ENCODE measurements at regions of chr14 and their contacts with region 1.

Region 1: DNA sequence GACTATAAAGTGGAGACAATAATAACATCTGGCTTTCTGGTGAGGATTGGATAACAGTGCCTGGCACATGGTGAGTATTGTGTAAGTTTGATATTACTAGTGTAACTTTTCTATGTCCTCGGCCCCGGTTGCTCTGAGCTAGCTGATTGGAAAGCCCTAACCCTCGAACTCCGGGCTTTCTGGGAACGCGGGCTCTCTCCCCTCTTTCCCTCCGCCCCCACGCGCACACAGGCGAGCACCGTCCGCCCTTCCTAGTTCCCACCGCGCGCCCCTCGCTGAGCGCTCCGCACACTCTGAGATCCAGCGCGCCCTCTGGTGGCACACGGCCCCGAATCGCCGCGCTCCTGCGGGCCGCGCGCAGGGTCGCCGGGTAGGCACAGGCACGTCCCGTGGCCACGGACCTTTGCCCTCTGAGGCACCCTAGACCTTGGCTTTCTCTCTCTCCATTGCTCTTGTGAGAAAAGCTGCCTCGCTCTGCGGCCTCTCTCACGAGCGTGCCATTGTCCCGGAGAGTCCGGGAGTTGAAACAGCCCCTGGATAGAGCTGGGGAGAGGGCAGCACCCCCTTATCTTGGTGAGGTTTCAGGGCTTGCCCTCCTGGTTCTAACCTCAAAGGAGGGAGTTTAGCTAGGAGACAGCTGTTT is 23.2 kb upstream of the ESRRB start:
- DNase-seq: peak; percentile 27 to 75 (median 55)
- H3K4me3 ChIP-seq: no peak overlapping the region
- H3K27ac ChIP-seq: no peak overlapping the region
- H3K4me1 ChIP-seq: no peaks in the 10 kb centered on the region
- H3K27me3 ChIP-seq: no peaks in the 10 kb centered on the region
- CTCF ChIP-seq: peak; percentile 43 to 62 (median 59)
- EP300 ChIP-seq: no peak
- POLR2A ChIP-seq: no peak

Region 2: DNA sequence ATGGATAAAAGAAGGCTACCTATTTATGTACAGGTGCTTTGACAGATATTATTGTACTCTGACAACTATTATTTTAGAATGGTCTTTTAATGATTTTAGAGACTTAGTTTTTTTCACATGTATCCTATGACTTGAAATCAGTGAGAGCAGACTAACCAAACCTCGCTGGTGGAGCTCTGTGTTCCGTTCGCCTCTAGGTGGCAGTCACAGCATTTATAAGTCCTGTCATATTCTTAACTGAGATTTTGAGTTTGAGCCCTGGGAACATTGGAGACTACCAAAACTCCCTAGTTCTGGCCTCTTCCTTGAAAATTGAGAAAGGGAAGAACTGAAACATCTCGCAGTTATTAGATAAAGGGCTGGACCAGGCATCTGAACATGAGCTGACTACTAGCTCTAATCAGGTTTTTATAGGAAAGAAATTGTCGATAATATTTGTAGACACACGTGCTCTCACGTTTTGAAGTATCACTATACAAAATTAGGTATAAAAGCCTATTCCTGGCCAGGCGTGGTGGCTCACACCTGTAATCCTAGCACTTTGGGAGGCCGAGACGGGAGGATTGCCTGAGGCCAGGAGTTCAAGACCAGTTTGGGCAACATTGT is 643.5 kb before region 1 on chr14:
- intact Hi-C with region 1: loop called in 2 of 4 experiments (anchors 5 to 10 kb)
- DNase-seq: peak; percentile 74 to 84 (median 78)
- H3K4me3 ChIP-seq: no peak overlapping the region
- H3K27ac ChIP-seq: no peak overlapping the region
- H3K4me1 ChIP-seq: no peaks in the 10 kb centered on the region
- H3K27me3 ChIP-seq: no peaks in the 10 kb centered on the region
- CTCF ChIP-seq: peak; percentile 52 to 67 (median 65)
- EP300 ChIP-seq: no peak
- POLR2A ChIP-seq: no peak

Region 3: DNA sequence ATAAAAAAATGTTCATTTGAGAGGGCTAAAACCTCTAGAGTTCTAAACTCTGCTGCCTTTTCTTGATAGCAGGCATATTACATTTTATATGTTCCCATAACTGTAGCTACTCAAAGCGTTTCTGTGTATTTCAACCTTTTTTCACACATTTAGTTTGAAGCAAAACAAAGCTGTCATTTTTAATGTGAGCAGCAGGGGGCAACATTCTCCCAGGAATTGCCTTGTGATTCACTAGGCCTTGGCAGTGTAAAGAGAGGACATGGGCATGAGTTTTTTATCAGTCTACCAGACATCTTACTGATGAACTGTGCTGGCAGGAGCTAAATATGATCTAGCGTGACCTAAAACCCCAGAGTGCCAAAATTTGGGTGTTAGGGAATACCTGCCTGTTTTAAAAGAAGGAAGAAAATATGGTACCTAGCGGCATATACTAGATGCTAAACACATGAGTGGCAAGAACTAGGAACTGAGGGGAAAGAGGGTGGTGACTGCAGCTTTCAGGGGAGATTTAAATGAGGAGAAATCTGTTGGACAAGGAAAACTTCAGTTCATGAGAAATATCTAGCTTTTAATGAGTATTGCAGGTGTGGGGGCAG is 301.9 kb before region 1 on chr14:
- intact Hi-C with region 1: loop called (anchors 2 to 5 kb)
- DNase-seq: peak in 4 of 5 donors; percentile 15 to 66 (median 38)
- H3K4me3 ChIP-seq: no peak overlapping the region
- H3K27ac ChIP-seq: no peak overlapping the region
- H3K4me1 ChIP-seq: peaks cover 2% of the 10 kb centered on the region
- H3K27me3 ChIP-seq: no peaks in the 10 kb centered on the region
- CTCF ChIP-seq: peak; percentile 44 to 72 (median 63)
- EP300 ChIP-seq: no peak
- POLR2A ChIP-seq: no peak